GM12878 (cell line): ENCODE measurements at regions of chr13 and their contacts with region 1.

Region 1: GRCh38 chr13:41960639-41961465 is at the start of gene VWA8:
- DNase-seq: no peak
- ATAC-seq: peak; percentile 93
- H3K4me3 ChIP-seq: peak within 1 kb of the TSS; percentile 82
- H3K27ac ChIP-seq: peak within 1 kb of the TSS; percentile 87
- H3K4me1 ChIP-seq: no peaks in the 10 kb centered on the region; the same call in 1 of the 2 replicates
- H3K27me3 ChIP-seq: no peaks in the 10 kb centered on the region
- CTCF ChIP-seq: 0 out of 6 replicates have a peak, but pooled peaks of 1 of the 3 experiments have one; percentile 2
- EP300 ChIP-seq: no peak
- POLR2A ChIP-seq: peak; percentile 85
- RAD21 ChIP-seq: no peak
- polyA plus RNA-seq, gene VWA8: 3.0 to 4.6 TPM

Region 2: GRCh38 chr13:41942462-41943094 is 18.3 kb before region 1 on chr13:
- CTCF ChIA-PET with region 1: interaction called, 6 read pairs
- POLR2A ChIA-PET with region 1: interaction called, 3 read pairs
- RAD21 ChIA-PET with region 1: interaction called, 12 read pairs
- SMC1A ChIA-PET with region 1: interaction called, 10 read pairs
- in situ Hi-C with region 1: no loop called
- intact Hi-C with region 1: no loop called
- DNase-seq: no peak
- ATAC-seq: peak; percentile 93
- H3K4me3 ChIP-seq: no peak overlapping the region
- H3K27ac ChIP-seq: no peak overlapping the region
- H3K4me1 ChIP-seq: no peaks in the 10 kb centered on the region
- H3K27me3 ChIP-seq: no peaks in the 10 kb centered on the region
- CTCF ChIP-seq: peak; percentile 31 to 39 (median 34); a peak in 4 of 6 replicates
- EP300 ChIP-seq: no peak
- POLR2A ChIP-seq: no peak
- RAD21 ChIP-seq: peak; percentile 55

Region 3: GRCh38 chr13:41995946-41996345 is 35.1 kb after region 1 on chr13:
- CTCF ChIA-PET with region 1: no interaction called
- POLR2A ChIA-PET with region 1: no interaction called
- RAD21 ChIA-PET with region 1: no interaction called
- SMC1A ChIA-PET with region 1: no interaction called
- in situ Hi-C with region 1: no loop called
- intact Hi-C with region 1: no loop called
- DNase-seq: no peak
- ATAC-seq: peak; percentile 57; the same call in 2 of the 3 replicates
- H3K4me3 ChIP-seq: no peak overlapping the region
- H3K27ac ChIP-seq: no peak overlapping the region
- H3K4me1 ChIP-seq: no peaks in the 10 kb centered on the region
- H3K27me3 ChIP-seq: no peaks in the 10 kb centered on the region; a peak in 1 of 4 replicates
- CTCF ChIP-seq: no peak
- EP300 ChIP-seq: no peak
- POLR2A ChIP-seq: no peak
- RAD21 ChIP-seq: no peak

Region 4: DNA sequence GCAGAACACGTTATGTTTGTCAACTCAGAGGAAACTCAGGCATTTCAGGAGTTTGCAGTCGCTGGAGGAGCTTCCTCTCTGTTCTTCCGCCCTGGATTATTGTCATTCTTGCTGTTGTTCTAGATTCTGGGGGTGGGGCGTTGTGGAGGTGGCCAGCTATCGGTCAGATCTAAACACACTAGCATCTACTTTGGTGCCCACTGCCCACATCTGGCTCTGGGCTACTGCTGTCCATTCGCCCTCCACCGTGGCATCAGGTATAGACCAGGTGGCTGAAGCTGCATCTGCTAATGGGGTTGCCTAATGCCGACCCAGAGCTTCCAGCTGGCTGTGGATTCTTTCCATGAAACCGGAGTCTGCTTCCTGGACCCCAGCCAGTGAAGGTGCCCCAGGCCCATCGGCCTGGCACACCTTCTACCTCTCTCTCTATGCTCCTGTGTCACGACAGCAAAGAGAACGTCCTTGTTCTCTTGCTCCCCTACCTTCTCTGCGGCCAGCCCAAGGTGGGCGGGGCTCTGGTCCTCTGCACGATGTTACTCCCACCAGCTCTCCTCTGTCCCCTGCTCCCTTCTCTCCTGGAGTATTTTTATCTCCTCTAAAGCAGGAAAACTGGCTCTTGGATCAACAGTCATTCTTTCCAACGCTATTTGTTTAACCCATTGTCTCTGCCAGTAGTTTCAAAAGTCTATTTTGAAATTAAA is 51.0 kb after region 1 on chr13:
- CTCF ChIA-PET with region 1: no interaction called
- POLR2A ChIA-PET with region 1: no interaction called
- RAD21 ChIA-PET with region 1: no interaction called
- SMC1A ChIA-PET with region 1: no interaction called
- in situ Hi-C with region 1: no loop called
- intact Hi-C with region 1: no loop called
- DNase-seq: no peak
- ATAC-seq: peak; percentile 40; the same call in 1 of the 3 replicates
- H3K4me3 ChIP-seq: no peak overlapping the region
- H3K27ac ChIP-seq: no peak overlapping the region
- H3K4me1 ChIP-seq: no peaks in the 10 kb centered on the region
- H3K27me3 ChIP-seq: no peaks in the 10 kb centered on the region; a peak in 1 of 4 replicates
- CTCF ChIP-seq: no peak
- EP300 ChIP-seq: no peak
- POLR2A ChIP-seq: no peak
- RAD21 ChIP-seq: no peak

Region 5: DNA sequence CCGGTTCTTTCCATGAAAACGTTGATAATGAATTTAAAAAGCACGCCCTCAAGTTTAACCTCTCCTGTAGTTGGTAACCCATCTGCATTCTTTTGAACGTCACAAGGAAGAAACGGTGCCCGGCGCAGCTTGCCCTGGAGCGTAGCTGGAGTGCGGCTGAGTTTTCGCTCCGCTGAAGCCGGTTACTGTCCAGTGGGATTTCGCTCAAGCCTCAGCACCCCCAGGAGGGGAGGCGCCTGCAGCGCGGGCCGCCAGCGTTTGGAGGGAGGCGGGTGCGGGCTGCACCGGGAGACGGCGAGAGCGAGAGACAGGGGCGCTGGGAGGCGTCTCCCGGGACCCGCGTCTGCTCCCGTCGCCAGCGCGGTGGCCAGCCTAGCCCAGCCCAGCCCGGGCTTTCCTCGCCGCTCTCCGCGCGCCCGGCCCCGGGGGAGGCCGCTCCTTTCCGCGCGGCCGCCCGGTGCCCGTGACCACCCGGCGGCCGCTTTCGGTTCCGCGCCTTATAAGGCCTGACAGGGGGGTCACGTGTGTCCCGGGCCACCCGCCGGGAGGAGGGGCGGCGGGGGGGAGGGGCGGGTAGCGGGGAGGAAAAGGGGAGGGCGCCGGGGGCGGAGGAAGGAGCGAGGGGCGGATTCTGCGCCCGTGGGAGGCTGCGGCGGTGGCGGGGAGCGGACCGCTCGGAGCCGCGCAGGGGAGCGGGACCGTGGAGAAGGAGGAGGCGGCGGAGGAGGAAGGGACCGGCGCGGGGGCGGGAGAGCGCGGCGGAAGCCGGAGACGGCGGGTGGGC is 79.3 kb after region 1 on chr13:
- CTCF ChIA-PET with region 1: interaction called, 8 read pairs
- POLR2A ChIA-PET with region 1: no interaction called
- RAD21 ChIA-PET with region 1: interaction called, 3 read pairs
- SMC1A ChIA-PET with region 1: interaction called, 8 read pairs
- in situ Hi-C with region 1: no loop called
- intact Hi-C with region 1: loop called (anchors 2 kb)
- DNase-seq: peak; percentile 25
- ATAC-seq: peak; percentile 82
- H3K4me3 ChIP-seq: peak overlapping the region; percentile 88
- H3K27ac ChIP-seq: peak overlapping the region; percentile 76
- H3K4me1 ChIP-seq: no peaks in the 10 kb centered on the region; the same call in 1 of the 2 replicates
- H3K27me3 ChIP-seq: no peaks in the 10 kb centered on the region
- CTCF ChIP-seq: no peak
- EP300 ChIP-seq: no peak
- POLR2A ChIP-seq: peak; percentile 97
- RAD21 ChIP-seq: no peak

Region 6: DNA sequence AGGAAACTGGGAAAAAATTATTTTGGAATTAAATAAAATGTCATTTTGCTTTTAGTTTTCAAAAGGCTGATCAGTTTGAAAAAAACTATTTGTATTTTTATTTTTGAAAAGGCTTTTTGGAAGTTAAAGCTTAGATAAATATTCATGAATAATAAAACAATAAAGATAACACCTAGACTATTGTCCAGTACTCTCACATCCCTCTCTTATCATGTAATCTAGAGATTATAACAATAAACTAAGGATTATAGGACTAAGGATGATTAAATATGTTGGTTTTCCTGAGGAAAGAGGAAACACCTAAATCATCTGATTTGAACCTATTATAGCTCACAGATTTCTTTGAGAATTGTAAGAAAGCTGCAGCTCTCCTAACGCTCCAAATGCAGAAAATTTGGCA is 229.7 kb after region 1 on chr13:
- CTCF ChIA-PET with region 1: no interaction called
- POLR2A ChIA-PET with region 1: no interaction called
- RAD21 ChIA-PET with region 1: no interaction called
- SMC1A ChIA-PET with region 1: no interaction called
- in situ Hi-C with region 1: no loop called
- intact Hi-C with region 1: no loop called
- DNase-seq: no peak
- ATAC-seq: no peak
- H3K4me3 ChIP-seq: no peak overlapping the region
- H3K27ac ChIP-seq: no peak overlapping the region
- H3K4me1 ChIP-seq: no peaks in the 10 kb centered on the region
- H3K27me3 ChIP-seq: no peaks in the 10 kb centered on the region
- CTCF ChIP-seq: no peak
- EP300 ChIP-seq: no peak
- POLR2A ChIP-seq: no peak
- RAD21 ChIP-seq: no peak

Region 7: DNA sequence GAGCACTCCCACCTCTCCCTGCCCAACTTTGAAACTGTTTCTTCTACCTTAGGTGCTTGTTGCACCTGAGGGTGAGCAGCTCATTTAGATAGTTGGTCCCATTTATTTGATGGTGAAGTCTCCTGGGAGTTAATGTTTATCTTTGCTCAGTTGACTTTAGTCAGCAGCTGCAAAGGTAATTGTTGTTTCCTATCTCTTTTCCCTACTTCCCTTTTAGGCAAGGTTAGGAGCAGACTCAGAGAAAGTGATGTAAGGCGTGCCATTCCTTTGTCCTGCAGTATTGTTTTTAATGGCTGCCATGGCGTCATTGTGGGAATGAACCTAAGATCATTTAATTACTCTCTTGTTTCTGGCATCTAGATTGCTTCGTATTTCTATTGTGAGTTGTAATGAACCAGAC is 322.7 kb after region 1 on chr13:
- CTCF ChIA-PET with region 1: no interaction called
- POLR2A ChIA-PET with region 1: no interaction called
- RAD21 ChIA-PET with region 1: no interaction called
- SMC1A ChIA-PET with region 1: no interaction called
- in situ Hi-C with region 1: no loop called
- intact Hi-C with region 1: no loop called
- DNase-seq: no peak
- ATAC-seq: no peak
- H3K4me3 ChIP-seq: no peak overlapping the region
- H3K27ac ChIP-seq: no peak overlapping the region
- H3K4me1 ChIP-seq: peaks cover 12% of the 10 kb centered on the region; the same call in 1 of the 2 replicates
- H3K27me3 ChIP-seq: no peaks in the 10 kb centered on the region
- CTCF ChIP-seq: no peak
- EP300 ChIP-seq: no peak
- POLR2A ChIP-seq: no peak
- RAD21 ChIP-seq: no peak